Activated CD4-positive, alpha-beta memory T cell treated with anti-CD3 and anti-CD28 coated beads, Interleukin-2, amount 10 ng/mL, durations not matched to agents 7 days and 5 days (primary cell): ENCODE measurements at regions of chr22 and their contacts with region 1.

Region 1: DNA sequence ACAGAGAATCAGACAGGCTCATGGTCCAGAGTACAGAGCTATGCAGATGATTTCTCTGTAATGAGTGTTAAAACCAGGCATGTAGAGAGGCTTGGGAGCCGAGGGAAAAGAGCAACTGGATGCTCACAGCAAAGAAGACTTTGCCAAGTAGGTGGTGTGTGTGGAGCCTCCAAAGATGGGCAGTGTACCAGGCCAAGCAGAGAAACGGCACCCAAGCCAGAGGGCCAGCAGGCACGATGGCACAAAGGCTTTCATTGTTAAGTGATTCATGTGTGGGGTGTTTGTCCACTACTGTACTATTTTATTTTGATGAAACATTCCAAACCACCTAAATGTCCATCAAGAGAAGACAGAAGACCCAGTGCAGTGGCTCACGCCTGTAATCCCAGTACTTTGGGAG is 11.1 kb downstream of the RANGAP1 start:
- DNase-seq: no peak
- H3K4me3 Mint-ChIP-seq: no peak overlapping the region
- H3K27ac Mint-ChIP-seq: no peak overlapping the region
- H3K4me1 Mint-ChIP-seq: no peaks in the 10 kb centered on the region
- H3K27me3 Mint-ChIP-seq: no peaks in the 10 kb centered on the region

Region 2: GRCh38 chr22:41264408-41264941 is 10.4 kb before region 1 on chr22:
- CTCF ChIA-PET with region 1: no interaction called
- POLR2A ChIA-PET with region 1: interaction called, 11 read pairs
- DNase-seq: no peak
- H3K4me3 Mint-ChIP-seq: no peak overlapping the region
- H3K27ac Mint-ChIP-seq: no peak overlapping the region
- H3K4me1 Mint-ChIP-seq: peaks cover 1% of the 10 kb centered on the region
- H3K27me3 Mint-ChIP-seq: no peaks in the 10 kb centered on the region